Posterior cingulate gyrus (tissue), 11 donors: ENCODE measurements at regions of chr6 and their contacts with region 1.

Region 1: DNA sequence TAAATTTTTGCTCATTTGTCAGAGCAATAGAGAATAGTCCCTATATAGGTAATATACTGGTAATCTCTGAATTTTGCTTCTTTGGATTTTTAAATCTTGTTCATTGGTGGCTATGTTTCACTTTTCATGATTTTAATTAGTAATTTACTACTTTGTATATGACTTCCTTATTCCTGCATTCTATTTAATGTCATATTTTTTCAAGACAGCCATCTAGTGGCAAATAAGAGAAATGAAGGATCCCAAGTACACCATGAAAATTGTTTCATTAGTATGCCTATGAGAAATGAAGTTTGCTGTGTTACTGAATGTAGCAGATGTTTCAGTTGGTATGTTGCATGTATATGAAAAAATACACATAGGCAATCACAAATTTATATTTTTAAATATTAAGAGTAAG is 82.4 kb downstream of the ZNF292 start:
- DNase-seq: no peak

Region 2: GRCh38 chr6:87066449-87067333 is 171.1 kb before region 1 on chr6:
- intact Hi-C with region 1: loop called (anchors 10 kb)
- DNase-seq: peak in 4 of 10 donors; percentile 12 to 45 (median 27)

Region 3: DNA sequence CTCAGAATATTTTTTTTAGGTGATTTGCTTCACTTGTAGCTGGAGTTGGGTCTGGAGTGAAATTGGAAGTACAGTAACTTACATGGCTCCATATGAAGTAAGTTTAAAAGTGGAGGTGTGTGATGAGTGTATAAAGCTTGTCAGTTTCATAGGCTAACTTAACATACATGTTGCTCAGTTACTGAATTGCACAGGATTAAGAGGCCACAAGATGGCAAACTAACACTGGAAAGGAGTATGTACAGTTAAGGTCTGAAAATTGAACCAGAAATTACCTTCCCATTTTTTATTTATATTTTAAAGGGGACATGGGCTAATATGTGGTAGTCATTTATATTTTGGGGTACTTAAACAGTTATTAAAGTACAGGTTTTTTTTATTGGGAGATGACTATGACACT is 39.3 kb after region 1 on chr6:
- intact Hi-C with region 1: no loop called
- DNase-seq: no peak

Region 4: DNA sequence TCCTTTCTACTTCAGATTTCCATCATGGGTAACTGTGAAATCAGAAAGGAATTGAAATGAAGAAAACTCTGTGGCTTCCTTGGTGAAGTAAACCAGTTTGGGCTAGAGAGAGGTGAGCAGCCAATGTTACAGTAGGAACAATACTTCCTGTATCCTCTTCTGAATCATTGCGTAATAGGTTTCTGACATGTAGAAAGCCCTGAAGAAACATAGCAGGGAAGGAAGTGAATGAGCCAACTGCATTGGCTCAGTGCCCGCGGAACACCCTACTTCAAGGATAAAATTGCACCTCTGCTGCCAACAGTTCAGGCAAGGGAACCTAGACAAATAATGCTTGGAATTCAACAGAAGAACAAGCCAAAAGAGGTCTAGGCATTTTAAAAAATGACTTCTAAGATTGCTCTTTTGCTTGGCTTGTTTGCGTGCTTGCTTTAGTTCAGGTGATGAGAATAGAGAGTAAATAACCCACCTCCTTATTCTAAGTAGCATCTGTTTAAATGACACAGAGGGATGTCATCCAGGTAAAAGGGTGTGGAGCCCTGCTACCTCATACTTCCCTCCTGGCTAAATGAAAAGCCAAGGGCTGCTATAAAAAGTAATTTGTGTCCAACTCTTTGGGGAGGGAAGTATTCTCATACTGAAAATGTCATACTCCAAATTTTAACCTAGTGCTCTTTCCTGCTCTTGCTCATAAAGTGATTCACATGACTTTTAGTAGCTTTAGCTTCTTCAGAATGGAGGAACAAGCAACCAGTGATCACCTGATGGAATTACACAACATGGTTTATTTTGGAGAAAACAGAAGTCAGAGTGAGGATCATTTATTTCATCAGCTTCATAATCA is 494.2 kb after region 1 on chr6:
- intact Hi-C with region 1: no loop called
- DNase-seq: peak in 6 of 10 donors; percentile 35 to 89 (median 50)